Heart left ventricle (tissue), 16 donors: ENCODE measurements at regions of chrX and their contacts with region 1.

Region 1: DNA sequence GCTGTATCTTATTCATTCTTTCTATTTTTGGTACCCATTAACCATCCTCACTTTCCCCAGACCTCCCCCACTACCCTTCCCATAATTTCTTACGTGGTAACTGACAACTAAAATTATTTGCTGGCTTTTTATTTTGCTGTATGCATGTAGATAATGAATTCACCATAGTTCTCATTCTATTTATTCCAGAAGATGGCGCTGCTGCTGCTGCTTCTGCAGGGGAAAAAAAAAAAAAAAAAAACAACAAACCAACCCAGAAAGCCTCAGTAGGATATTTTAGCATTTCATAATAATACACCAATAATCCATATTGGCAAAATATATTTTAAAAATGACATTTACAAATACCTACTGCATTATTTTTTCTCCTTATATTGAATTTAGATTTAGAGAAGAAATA is 416.6 kb upstream of the MAGEB18 start:
- DNase-seq: no peak
- ATAC-seq: no peak
- H3K4me3 ChIP-seq: no peak overlapping the region
- H3K27ac ChIP-seq: no peak overlapping the region
- H3K4me1 ChIP-seq: no peaks in the 10 kb centered on the region
- H3K27me3 ChIP-seq: no peaks in the 10 kb centered on the region
- CTCF ChIP-seq: peak in 11 of 12 donors; percentile 8 to 51 (median 35)
- POLR2A ChIP-seq: no peak

Region 2: DNA sequence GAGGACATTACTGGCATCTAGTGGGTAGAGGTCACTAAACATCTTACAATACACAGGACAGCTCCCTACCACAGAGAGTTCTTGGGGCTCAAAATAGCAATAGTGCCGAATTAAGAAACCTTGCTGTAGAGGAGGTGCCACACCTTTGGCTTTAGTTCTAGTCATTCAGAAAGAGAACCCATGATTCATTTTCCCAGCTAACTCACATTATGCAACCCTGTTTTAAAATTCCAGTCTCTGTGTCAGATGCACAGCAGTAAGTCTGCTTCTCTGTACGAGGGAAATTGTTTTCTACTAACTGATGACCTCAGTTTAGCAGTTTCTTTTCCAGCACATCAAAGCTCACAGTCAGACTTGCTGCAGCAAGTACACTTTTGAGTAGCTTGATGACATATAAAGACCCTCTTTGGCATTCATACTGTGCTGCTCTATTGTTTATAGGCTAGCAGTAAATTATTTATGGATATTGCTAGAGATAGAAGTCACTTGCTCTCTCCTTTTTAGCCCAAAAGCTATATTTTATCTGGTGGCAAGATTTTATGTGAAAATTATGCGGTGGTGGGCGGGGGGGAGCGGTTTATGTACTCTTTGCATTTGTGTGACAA is 71.2 kb before region 1 on chrX:
- intact Hi-C with region 1: no loop called
- DNase-seq: no peak
- ATAC-seq: no peak
- H3K4me3 ChIP-seq: no peak overlapping the region
- H3K27ac ChIP-seq: no peak overlapping the region
- H3K4me1 ChIP-seq: no peaks in the 10 kb centered on the region
- H3K27me3 ChIP-seq: no peaks in the 10 kb centered on the region
- CTCF ChIP-seq: no peak
- POLR2A ChIP-seq: no peak

Region 3: GRCh38 chrX:25968920-25969319 is 247.4 kb after region 1 on chrX:
- intact Hi-C with region 1: loop called in 9 of 10 experiments (anchors 2 to 10 kb)
- DNase-seq: peak in 2 of 5 donors; percentile 9 to 31
- ATAC-seq: no peak
- H3K4me3 ChIP-seq: no peak overlapping the region
- H3K27ac ChIP-seq: no peak overlapping the region
- H3K4me1 ChIP-seq: no peaks in the 10 kb centered on the region
- H3K27me3 ChIP-seq: no peaks in the 10 kb centered on the region
- CTCF ChIP-seq: peak in 9 of 12 donors; percentile 9 to 46 (median 27)
- POLR2A ChIP-seq: no peak

Region 4: DNA sequence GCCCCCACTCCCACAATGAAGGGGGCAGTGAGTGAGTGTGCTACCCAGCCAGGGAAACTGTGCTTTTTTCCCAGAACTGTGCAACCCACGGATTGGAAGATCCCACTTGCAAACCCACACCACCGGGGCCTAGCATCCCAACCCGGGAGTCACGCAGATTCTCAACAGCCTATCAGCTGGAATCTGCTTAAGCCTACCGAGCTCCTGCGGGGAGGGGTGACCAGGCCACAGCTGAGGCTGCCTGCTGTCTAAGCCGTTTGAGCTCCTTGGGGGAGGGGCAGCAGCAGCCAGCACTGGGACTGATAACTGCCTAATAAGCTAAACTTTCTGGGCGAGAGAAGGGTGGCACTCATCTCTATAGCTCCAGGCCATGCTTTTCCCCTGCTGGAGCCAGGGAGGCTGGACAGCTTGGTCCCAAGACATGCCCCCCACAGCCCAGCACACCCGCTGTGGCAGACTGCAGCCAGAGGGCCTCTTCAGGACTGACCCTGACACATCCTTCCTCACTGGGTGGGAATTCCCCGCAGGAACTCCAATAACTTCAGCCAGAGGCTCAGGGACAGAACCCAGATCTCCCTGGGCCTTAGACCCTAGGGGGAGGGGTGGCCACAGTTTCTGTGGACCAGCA is 255.2 kb after region 1 on chrX:
- intact Hi-C with region 1: loop called in 2 of 10 experiments (anchors 10 kb)
- DNase-seq: no peak
- ATAC-seq: no peak
- H3K4me3 ChIP-seq: no peak overlapping the region
- H3K27ac ChIP-seq: no peak overlapping the region
- H3K4me1 ChIP-seq: no peaks in the 10 kb centered on the region
- H3K27me3 ChIP-seq: no peaks in the 10 kb centered on the region
- CTCF ChIP-seq: no peak
- POLR2A ChIP-seq: no peak